ENCODE measurements at regions of chr15 and their contacts with region 1.

Region 1: GRCh38 chr15:58331903-58332675 is 99.7 kb upstream of the LIPC start:
- DNase-seq: peak; percentile 96
- H3K4me3 ChIP-seq: peak overlapping the region; percentile 52; the same call in 1 of the 2 replicates
- H3K27ac ChIP-seq: peak overlapping the region; percentile 98
- H3K4me1 ChIP-seq: peaks cover 55% of the 10 kb centered on the region
- H3K27me3 ChIP-seq: no peaks in the 10 kb centered on the region
- CTCF ChIP-seq: no peak

Region 2: GRCh38 chr15:58227706-58228543 is 104.2 kb before region 1 on chr15:
- CTCF ChIA-PET with region 1: no interaction called
- POLR2A ChIA-PET with region 1: no interaction called
- intact Hi-C with region 1: loop called (anchors 1 kb)
- DNase-seq: peak; percentile 48 to 69
- H3K4me3 ChIP-seq: no peak overlapping the region
- H3K27ac ChIP-seq: peak overlapping the region; percentile 32; the same call in 1 of the 2 replicates
- H3K4me1 ChIP-seq: peaks cover 25% of the 10 kb centered on the region
- H3K27me3 ChIP-seq: no peaks in the 10 kb centered on the region
- CTCF ChIP-seq: peak; percentile 87

Region 3: DNA sequence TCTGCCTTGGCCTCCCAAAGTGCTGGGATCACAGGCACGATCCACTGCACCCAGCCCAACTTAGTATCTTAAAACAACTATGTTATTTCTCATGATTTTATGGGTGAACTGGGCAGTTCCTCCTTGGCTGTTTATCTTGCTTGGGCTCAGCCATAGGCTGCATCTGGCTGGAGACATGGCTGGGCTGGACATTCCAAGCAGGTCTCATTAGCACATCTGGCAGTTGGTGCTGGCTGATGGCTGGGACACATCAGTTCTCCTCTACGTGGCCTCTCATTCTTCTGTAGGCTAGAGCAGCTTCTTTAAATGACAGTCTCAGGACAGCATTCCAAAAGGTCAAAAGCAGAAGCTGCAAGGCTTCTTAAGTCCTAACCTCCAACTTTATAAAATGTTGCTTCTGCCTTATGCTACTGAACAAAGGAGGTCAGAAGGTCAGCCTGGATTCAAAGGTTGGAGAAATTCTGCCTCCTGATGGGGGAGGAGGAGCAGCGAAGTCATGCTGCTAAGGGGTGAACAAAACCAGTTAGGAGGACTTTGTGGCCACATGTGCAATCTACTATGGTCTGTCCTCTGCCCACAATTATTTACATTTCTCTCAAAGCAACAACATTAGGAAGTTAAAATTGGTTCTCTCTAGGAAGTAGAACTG is 49.9 kb before region 1 on chr15:
- CTCF ChIA-PET with region 1: no interaction called
- POLR2A ChIA-PET with region 1: interaction called, 12 read pairs
- intact Hi-C with region 1: no loop called
- DNase-seq: no peak
- H3K4me3 ChIP-seq: no peak overlapping the region
- H3K27ac ChIP-seq: no peak overlapping the region
- H3K4me1 ChIP-seq: 0 out of 2 replicates have a peak, but pooled peaks cover 4% of the 10 kb centered on the region
- H3K27me3 ChIP-seq: no peaks in the 10 kb centered on the region
- CTCF ChIP-seq: no peak

Region 4: GRCh38 chr15:58440158-58440910 is 108.2 kb after region 1 on chr15:
- CTCF ChIA-PET with region 1: no interaction called
- POLR2A ChIA-PET with region 1: interaction called, 21 read pairs
- intact Hi-C with region 1: loop called (anchors 1 kb)
- DNase-seq: peak; percentile 43 to 94
- H3K4me3 ChIP-seq: peak overlapping the region; percentile 41; the same call in 1 of the 2 replicates
- H3K27ac ChIP-seq: peak overlapping the region; percentile 100
- H3K4me1 ChIP-seq: peaks cover 65% of the 10 kb centered on the region
- H3K27me3 ChIP-seq: no peaks in the 10 kb centered on the region
- CTCF ChIP-seq: no peak

Region 5: GRCh38 chr15:58506064-58506490 is 174.0 kb after region 1 on chr15:
- CTCF ChIA-PET with region 1: no interaction called
- POLR2A ChIA-PET with region 1: interaction called, 3 read pairs
- intact Hi-C with region 1: loop called (anchors 1 kb)
- DNase-seq: peak; percentile 43 to 75
- H3K4me3 ChIP-seq: no peak overlapping the region
- H3K27ac ChIP-seq: 0 out of 2 replicates have a peak overlapping the region, but pooled peaks have one; percentile 40
- H3K4me1 ChIP-seq: peaks cover 17% of the 10 kb centered on the region
- H3K27me3 ChIP-seq: no peaks in the 10 kb centered on the region
- CTCF ChIP-seq: no peak

Region 6: GRCh38 chr15:58551764-58552504 is 219.8 kb after region 1 on chr15:
- CTCF ChIA-PET with region 1: no interaction called
- POLR2A ChIA-PET with region 1: interaction called, 3 read pairs
- intact Hi-C with region 1: loop called (anchors 1 kb)
- DNase-seq: peak; percentile 59 to 92
- H3K4me3 ChIP-seq: peak overlapping the region; percentile 44; the same call in 1 of the 2 replicates
- H3K27ac ChIP-seq: peak overlapping the region; percentile 97
- H3K4me1 ChIP-seq: peaks cover 55% of the 10 kb centered on the region
- H3K27me3 ChIP-seq: no peaks in the 10 kb centered on the region
- CTCF ChIP-seq: no peak

Region 7: DNA sequence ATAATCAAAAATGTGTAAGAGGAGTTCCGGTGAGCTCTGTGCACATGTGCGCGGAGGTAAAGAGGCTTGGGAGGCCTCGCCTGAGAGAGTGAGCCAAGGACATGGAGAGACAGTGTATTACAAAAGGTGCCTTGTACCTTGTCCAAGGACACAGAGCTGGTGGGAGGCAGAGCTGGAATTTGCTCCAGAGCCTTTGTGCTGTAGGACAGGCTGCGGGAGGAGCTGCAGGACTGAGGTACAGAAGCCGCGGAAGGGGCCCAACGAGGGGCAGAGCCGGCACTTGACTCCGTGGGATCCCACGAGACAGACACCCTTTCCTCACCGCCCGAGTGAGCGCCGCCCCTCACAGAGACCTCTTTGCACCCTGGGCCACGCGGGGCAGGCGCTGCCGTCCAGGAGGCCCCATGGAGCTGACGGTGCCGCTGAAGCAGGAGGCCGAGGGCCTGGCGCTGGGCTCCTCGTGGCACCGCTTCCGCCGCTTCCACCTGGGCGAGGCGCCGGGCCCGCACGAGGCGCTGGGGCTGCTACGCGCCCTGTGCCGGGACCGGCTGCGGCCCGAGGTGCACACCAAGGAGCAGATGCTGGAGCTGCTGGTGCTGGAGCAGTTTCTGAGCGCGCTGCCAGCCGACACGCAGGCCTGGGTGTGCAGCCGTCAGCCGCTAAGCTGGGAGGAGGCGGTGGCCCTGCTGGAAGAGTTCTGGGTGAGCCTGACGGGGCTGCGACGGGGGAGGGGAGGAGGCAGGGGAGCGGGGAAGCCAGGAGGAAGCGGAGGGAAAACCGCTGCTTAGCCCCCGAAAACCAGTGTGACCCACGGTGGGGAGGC is 532.7 kb after region 1 on chr15:
- CTCF ChIA-PET with region 1: no interaction called
- POLR2A ChIA-PET with region 1: no interaction called
- intact Hi-C with region 1: loop called (anchors 5 kb)
- DNase-seq: peak; percentile 47 to 54
- H3K4me3 ChIP-seq: peak overlapping the region; percentile 58
- H3K27ac ChIP-seq: peak overlapping the region; percentile 77
- H3K4me1 ChIP-seq: no peaks in the 10 kb centered on the region
- H3K27me3 ChIP-seq: no peaks in the 10 kb centered on the region
- CTCF ChIP-seq: no peak